HEK293 (cell line): ENCODE measurements at regions of chr1 and their contacts with region 1.

Region 1: GRCh38 chr1:21368515-21369289 is 71.2 kb upstream of the NBPF3 start:
- H3K4me3 ChIP-seq: no peak overlapping the region
- H3K27ac ChIP-seq: no peak overlapping the region
- H3K4me1 ChIP-seq: no peaks in the 10 kb centered on the region
- CTCF ChIP-seq: peak; percentile 99

Region 2: GRCh38 chr1:21012937-21013336 is 355.8 kb before region 1 on chr1:
- CTCF ChIA-PET with region 1: no interaction called
- POLR2A ChIA-PET with region 1: no interaction called
- H3K4me3 ChIP-seq: no peak overlapping the region
- H3K27ac ChIP-seq: peak overlapping the region; percentile 18; the same call in 1 of the 2 replicates
- H3K4me1 ChIP-seq: peaks cover 7% of the 10 kb centered on the region; the same call in 1 of the 2 replicates
- CTCF ChIP-seq: no peak

Region 3: DNA sequence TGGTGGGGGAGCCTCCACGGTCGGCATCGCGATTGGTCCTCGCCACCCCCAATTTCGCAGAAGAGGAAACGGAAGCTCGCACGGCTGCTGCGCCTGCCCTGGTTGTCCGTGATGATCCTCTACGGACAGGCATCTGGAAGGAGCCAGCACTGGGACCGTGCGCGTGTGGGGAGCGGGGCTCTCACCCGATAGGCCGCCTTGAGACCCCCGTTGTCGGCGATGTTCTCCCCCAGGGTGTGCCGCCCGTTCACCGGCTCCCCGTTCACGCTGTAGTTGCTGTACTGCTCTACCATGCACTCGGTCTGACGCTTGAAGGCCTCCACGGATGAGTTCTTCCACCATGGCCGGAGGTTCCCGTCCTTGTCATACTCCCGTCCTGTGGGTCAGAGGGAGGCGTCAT is 143.6 kb before region 1 on chr1:
- CTCF ChIA-PET with region 1: interaction called, 11 read pairs
- POLR2A ChIA-PET with region 1: no interaction called
- H3K4me3 ChIP-seq: no peak overlapping the region
- H3K27ac ChIP-seq: no peak overlapping the region
- H3K4me1 ChIP-seq: no peaks in the 10 kb centered on the region
- CTCF ChIP-seq: no peak

Region 4: GRCh38 chr1:21244986-21245687 is 123.6 kb before region 1 on chr1:
- CTCF ChIA-PET with region 1: interaction called, 51 read pairs
- POLR2A ChIA-PET with region 1: no interaction called
- H3K4me3 ChIP-seq: no peak overlapping the region
- H3K27ac ChIP-seq: no peak overlapping the region
- H3K4me1 ChIP-seq: no peaks in the 10 kb centered on the region
- CTCF ChIP-seq: no peak

Region 5: GRCh38 chr1:21270086-21270689 is 98.5 kb before region 1 on chr1:
- CTCF ChIA-PET with region 1: interaction called, 20 read pairs
- POLR2A ChIA-PET with region 1: no interaction called
- H3K4me3 ChIP-seq: no peak overlapping the region
- H3K27ac ChIP-seq: no peak overlapping the region
- H3K4me1 ChIP-seq: no peaks in the 10 kb centered on the region
- CTCF ChIP-seq: peak; percentile 87

Region 6: GRCh38 chr1:21355956-21356355 is 12.7 kb before region 1 on chr1:
- CTCF ChIA-PET with region 1: interaction called, 18 read pairs
- POLR2A ChIA-PET with region 1: no interaction called
- H3K4me3 ChIP-seq: no peak overlapping the region
- H3K27ac ChIP-seq: no peak overlapping the region
- H3K4me1 ChIP-seq: no peaks in the 10 kb centered on the region
- CTCF ChIP-seq: no peak

Region 7: DNA sequence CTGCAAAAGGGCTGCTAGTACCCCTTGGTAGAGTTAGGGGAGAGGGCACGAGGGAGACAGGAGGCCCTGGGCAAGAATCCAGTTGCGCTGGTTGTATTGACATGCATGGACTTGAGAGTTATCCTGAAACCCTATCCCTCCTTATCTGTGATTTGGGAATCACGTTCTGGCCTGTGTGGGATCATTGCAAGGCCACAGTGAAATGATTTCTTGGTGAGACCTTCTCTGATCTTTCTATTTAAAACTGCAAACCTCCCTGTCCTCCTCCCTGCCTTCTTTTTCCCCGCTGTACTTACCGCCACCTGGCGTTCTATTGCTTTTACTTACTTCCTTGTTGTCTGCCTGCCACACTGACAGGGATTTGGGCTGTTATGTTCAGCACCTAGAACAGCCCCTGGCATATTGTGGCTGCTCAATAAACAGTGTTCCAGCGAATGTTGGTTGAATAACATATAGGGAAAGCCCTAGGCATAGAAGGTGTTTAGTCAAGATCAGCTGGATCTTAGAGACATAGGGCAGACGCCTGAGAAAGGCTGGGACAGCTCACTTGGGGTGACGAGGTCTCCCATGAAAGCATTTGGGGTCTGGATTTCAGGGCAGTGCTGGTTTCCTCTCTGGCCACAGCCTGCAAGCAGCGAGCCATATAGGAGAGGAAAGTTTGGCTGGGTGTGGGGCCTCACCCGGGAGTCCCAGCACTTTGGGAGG is 166.1 kb after region 1 on chr1:
- CTCF ChIA-PET with region 1: interaction called, 18 read pairs
- POLR2A ChIA-PET with region 1: no interaction called
- H3K4me3 ChIP-seq: no peak overlapping the region
- H3K27ac ChIP-seq: no peak overlapping the region
- H3K4me1 ChIP-seq: no peaks in the 10 kb centered on the region
- CTCF ChIP-seq: peak; percentile 73

Region 8: DNA sequence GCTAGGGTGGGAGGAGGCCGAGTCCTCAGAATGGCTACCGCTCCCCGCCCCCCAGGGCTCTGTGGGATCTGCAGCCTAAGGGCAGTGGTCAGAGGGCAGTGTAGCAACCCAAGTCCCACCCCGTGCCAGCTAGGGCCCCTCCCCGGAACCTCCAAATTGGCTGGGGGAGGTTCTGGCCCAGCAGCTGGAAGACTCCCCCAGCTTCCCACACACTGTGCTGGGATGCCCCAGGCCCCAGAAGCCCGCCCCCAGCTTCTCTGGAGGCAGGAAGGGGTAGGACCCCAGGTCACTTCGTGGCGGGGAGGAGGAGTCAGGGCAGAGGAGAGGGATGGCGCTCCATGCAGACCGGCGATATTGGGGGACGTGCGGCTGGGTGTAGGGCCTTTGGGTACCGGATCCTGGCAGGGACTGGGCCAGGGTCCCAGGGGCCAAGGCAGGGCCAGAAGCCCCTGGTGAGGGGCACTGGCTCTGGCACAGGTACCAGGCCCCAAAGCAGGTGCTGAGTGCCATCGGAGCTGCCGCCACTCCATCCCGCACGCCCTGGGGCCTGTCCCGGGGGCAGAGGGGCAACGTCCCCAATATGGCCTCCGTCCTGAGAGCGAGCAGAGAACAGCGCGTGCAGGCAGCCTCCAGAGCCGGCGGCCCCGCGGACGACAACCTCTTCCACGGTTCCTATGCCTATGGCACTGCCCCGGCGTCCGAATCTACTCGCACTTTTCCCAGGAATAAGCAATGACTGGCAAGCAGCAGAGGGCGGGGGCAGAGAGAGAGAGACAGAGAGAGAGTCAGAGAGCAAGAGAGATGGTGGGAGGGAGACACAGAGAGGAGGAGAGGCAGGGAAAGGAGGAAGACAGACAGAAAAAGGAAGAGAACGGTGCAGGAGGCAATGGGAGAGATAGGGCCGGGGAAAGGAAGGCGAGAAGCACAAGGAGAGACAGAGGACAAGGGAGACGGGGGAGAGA is 234.8 kb after region 1 on chr1:
- CTCF ChIA-PET with region 1: no interaction called
- POLR2A ChIA-PET with region 1: no interaction called
- H3K4me3 ChIP-seq: no peak overlapping the region
- H3K27ac ChIP-seq: no peak overlapping the region
- H3K4me1 ChIP-seq: no peaks in the 10 kb centered on the region
- CTCF ChIP-seq: no peak

Region 9: DNA sequence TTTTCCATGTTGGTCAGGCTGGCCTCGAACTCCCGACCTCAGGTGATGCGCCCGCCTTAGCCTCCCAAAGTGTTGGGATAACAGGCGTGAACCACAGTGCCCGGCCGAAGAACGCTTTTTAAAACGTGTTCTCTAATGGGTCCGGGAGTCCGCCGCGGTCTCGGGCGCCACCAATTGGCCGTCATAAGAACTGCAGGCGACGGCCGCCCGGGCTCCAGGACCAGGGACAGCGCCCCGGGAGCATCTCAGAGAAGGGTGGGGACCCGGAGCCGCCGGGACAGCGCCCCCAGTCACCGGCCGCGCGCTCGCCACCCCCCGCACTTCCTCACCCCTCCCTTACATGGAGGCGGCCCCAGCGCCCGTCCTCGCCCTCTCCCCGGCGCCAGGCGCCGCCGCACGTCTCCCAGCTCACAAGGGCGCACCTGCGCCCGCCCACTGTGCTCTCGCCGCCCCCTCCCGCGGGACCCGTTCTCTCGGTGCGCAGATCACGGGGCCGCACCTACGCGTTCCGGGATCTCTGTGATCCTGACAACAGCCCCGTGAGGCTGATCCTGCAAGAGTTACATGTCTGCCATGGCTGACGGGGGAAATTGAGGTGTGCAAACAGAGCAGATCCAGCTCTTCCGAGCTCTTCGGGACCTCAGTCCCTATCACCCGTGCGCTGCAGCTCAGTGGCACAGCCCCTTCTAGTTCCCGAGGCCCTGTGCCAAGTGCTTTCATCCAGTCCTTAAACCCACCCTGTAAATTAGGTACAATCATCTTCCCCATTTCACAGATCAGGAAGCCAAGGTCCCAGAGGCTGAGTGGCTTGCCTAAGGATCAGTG is 290.6 kb after region 1 on chr1:
- CTCF ChIA-PET with region 1: interaction called, 13 read pairs
- POLR2A ChIA-PET with region 1: no interaction called
- H3K4me3 ChIP-seq: peak overlapping the region; percentile 25
- H3K27ac ChIP-seq: no peak overlapping the region
- H3K4me1 ChIP-seq: no peaks in the 10 kb centered on the region
- CTCF ChIP-seq: peak; percentile 97